Breast epithelium (tissue), 4 donors: ENCODE measurements at regions of chr6 and their contacts with region 1.

Region 1: DNA sequence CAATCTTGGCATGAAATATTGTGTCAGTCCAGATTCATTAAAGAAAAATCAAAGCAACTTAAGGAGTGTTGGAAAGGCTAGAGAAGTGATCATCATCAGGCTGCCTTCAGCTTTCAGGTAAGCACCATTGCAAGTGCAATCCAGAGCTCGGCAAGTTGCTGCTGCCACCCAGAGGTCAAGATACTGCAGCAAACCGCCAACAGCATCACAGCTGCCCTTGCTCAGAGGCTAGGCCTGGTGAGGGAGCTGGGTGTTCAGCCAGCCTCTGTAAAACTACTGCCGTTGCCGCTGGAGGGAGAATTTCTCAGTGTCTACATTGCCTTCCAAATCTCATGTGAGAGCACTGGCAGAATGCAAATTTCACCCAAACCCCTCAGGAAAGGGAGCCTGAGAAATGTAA is 5.8 kb upstream of the SYNE1 start:
- DNase-seq: no peak
- H3K4me3 ChIP-seq: no peak overlapping the region
- H3K27ac ChIP-seq: no peak overlapping the region
- H3K4me1 ChIP-seq: no peaks in the 10 kb centered on the region
- H3K27me3 ChIP-seq: no peaks in the 10 kb centered on the region
- CTCF ChIP-seq: no peak
- POLR2A ChIP-seq: no peak

Region 2: GRCh38 chr6:151464702-151465101 is 1178.3 kb before region 1 on chr6:
- intact Hi-C with region 1: loop called (anchors 5 kb)
- DNase-seq: no peak
- H3K4me3 ChIP-seq: no peak overlapping the region
- H3K27ac ChIP-seq: no peak overlapping the region
- H3K4me1 ChIP-seq: no peaks in the 10 kb centered on the region
- H3K27me3 ChIP-seq: no peaks in the 10 kb centered on the region
- CTCF ChIP-seq: no peak
- POLR2A ChIP-seq: no peak

Region 3: GRCh38 chr6:152338335-152339125 is 304.5 kb before region 1 on chr6:
- intact Hi-C with region 1: no loop called
- DNase-seq: no peak
- H3K4me3 ChIP-seq: no peak overlapping the region
- H3K27ac ChIP-seq: no peak overlapping the region
- H3K4me1 ChIP-seq: no peaks in the 10 kb centered on the region
- H3K27me3 ChIP-seq: no peaks in the 10 kb centered on the region
- CTCF ChIP-seq: peak; percentile 29 to 64 (median 60)
- POLR2A ChIP-seq: no peak